SK-N-SH (cell line): ENCODE measurements at regions of chr16 and their contacts with region 1.

Region 1: GRCh38 chr16:2968738-2969544 is at the start of gene PAQR4:
- DNase-seq: peak; percentile 98
- H3K4me3 ChIP-seq: peak within 1 kb of the TSS; percentile 74 to 80
- H3K27ac ChIP-seq: peak within 1 kb of the TSS in 1 of 2 experiments; percentile 67; a peak in 2 of 4 replicates
- H3K4me1 ChIP-seq: peaks cover 0 to 45% of the 10 kb centered on the region in 2 experiments; a peak in 1 of 4 replicates
- H3K27me3 ChIP-seq: no peaks in the 10 kb centered on the region
- CTCF ChIP-seq: no peak
- EP300 ChIP-seq: no peak
- RAD21 ChIP-seq: no peak
- polyA plus RNA-seq, gene PAQR4: 8.4 and 8.8 TPM in 2 replicates

Region 2: GRCh38 chr16:2980227-2981086 is 11.5 kb after region 1 on chr16 and contains the start of gene PKMYT1:
- CTCF ChIA-PET with region 1: interaction called, 25 read pairs
- POLR2A ChIA-PET with region 1: interaction called, 12 read pairs
- DNase-seq: peak; percentile 100
- H3K4me3 ChIP-seq: peak within 1 kb of the TSS; percentile 69
- H3K27ac ChIP-seq: peak within 1 kb of the TSS; percentile 57 to 87
- H3K4me1 ChIP-seq: peaks cover 4 to 10% of the 10 kb centered on the region in 2 experiments; a peak in 2 of 4 replicates
- H3K27me3 ChIP-seq: no peaks in the 10 kb centered on the region
- CTCF ChIP-seq: no peak
- EP300 ChIP-seq: no peak
- RAD21 ChIP-seq: no peak
- polyA plus RNA-seq, gene PKMYT1: 5.3 and 8.5 TPM in 2 replicates